AG04449 (cell line): ENCODE measurements at regions of chr12 and their contacts with region 1.

Region 1: DNA sequence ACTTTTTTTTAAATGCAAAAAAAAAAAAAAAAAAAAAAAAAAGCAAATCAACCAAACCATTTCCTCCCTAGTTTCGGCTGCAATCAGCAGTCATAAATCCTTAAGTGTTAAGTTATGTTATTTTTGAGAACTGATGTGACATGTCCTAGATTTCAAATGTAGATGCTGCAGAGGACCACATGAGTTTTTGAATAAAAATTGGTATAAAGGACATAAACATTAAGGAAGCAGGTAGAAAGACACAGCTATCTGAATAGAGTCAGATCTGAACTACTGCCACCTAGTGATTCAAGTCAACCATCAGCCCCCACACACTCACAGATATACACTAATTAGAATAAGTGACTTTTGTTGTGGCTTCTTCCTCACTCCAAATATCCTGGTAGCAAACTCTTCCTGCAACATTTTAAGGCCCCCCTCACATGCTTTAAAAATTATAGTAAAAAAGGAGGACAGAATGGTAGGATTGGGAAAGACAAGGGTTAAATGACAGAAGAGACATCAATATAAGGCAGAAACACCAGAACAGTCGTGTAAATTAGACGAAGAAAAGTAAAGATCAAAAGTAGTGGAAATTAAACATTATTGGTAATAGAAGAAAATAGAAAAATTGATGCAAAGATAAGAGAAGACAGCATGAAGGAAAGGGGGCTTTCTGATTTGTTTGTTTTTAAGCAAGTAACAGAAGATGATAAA is 394.5 kb upstream of the ATP2B1 start:
- DNase-seq: no peak
- H3K4me3 ChIP-seq: no peak overlapping the region
- CTCF ChIP-seq: peak; percentile 59

Region 2: GRCh38 chr12:89542912-89543592 is 560.1 kb before region 1 on chr12:
- CTCF ChIA-PET with region 1: interaction called, 65 read pairs
- POLR2A ChIA-PET with region 1: no interaction called
- DNase-seq: no peak
- H3K4me3 ChIP-seq: no peak overlapping the region
- CTCF ChIP-seq: peak; percentile 77

Region 3: DNA sequence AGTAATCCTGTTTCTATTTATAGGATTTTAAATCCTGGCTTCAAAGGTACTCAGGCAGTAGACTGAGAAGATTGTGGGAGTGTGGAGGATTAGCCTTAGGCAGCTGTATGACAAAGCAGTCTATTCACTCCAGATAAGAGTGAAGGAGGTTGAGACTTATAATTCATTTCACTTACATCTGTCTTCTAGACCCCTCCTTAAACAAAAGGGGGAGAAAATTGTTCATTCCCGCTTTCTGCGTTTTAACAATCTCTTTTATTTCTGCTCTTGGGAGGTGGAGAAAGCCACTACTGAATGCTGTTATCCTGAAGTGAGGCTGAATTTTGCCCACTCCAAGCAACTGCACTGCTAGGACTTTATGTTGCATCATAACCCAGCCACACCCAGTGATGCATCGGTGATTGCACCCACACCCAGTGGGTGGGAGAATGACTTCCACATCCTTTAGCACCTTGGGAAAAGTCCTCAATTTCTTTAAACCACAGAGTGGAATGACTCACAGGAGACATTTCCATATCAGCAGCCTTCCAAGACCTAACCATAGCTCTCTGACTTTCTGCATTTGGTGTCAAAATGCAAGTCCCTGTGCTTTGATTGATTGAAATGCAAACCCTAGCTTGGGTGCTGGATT is 12.0 kb before region 1 on chr12:
- CTCF ChIA-PET with region 1: interaction called, 12 read pairs
- POLR2A ChIA-PET with region 1: no interaction called
- DNase-seq: peak; percentile 50
- H3K4me3 ChIP-seq: no peak overlapping the region
- CTCF ChIP-seq: no peak

Region 4: DNA sequence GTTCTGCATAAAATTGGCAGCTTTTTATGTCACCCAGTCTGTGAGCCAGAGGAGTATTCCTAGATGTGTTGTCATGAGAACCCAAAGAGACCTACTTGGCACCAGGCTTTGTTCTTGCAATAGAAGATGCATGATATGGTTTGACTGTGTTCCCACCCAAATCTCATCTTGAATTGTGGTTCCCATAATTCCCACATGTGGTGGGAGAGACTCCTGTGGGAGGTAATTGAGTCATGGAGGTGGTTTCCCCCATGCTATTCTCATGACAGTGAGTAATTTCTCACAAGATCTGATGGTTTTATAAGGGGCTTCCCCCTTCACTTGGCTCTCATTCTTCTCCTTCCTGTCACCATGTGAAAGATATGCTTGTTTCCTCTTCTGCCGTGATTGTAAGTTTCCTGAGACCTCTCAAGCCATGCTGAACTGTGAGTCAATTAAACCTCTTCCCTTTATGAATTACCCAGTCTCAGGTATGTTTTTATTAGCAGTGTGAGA is 177.5 kb after region 1 on chr12:
- CTCF ChIA-PET with region 1: no interaction called
- POLR2A ChIA-PET with region 1: no interaction called
- DNase-seq: no peak
- H3K4me3 ChIP-seq: no peak overlapping the region
- CTCF ChIP-seq: no peak